GM12878 (cell line): ENCODE measurements at regions of chr2 and their contacts with region 1.

Region 1: DNA sequence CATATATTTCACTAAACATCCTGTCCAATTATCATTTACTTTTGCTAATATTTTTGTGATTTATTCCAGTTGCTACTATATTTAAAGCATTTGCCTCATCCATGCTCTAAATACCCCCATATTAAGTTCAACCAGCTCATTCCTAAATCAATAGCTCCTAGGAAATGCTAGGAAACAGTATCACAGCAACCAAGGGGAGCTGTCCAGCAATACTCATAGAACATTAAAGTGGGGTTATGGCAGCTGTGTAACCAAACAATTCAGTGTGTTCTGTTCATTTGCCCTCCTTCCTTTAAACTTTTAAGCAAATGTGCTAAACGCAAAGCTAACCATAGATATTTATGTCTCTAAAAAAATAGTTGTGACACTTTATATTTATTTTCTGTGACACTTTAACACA is 41.1 kb downstream of the ACVR1C start:
- DNase-seq: no peak
- ATAC-seq: no peak
- H3K4me3 ChIP-seq: no peak overlapping the region
- H3K27ac ChIP-seq: no peak overlapping the region
- H3K4me1 ChIP-seq: no peaks in the 10 kb centered on the region
- H3K27me3 ChIP-seq: no peaks in the 10 kb centered on the region; a peak in 1 of 4 replicates
- CTCF ChIP-seq: no peak
- EP300 ChIP-seq: no peak
- POLR2A ChIP-seq: no peak
- RAD21 ChIP-seq: no peak

Region 2: GRCh38 chr2:157509744-157510143 is 77.8 kb before region 1 on chr2:
- CTCF ChIA-PET with region 1: no interaction called
- POLR2A ChIA-PET with region 1: no interaction called
- RAD21 ChIA-PET with region 1: no interaction called
- SMC1A ChIA-PET with region 1: no interaction called
- in situ Hi-C with region 1: no loop called
- intact Hi-C with region 1: loop called (anchors 5 kb)
- DNase-seq: no peak
- ATAC-seq: no peak
- H3K4me3 ChIP-seq: no peak overlapping the region
- H3K27ac ChIP-seq: no peak overlapping the region
- H3K4me1 ChIP-seq: no peaks in the 10 kb centered on the region
- H3K27me3 ChIP-seq: peaks cover 0 to 3% of the 10 kb centered on the region in 2 experiments; a peak in 1 of 4 replicates
- CTCF ChIP-seq: peak in 1 of 3 experiments; percentile 15; a peak in 1 of 6 replicates
- EP300 ChIP-seq: no peak
- POLR2A ChIP-seq: no peak
- RAD21 ChIP-seq: peak; percentile 34; the same call in 1 of the 2 replicates